ENCODE measurements at regions of chr16 and their contacts with region 1.

Region 1: DNA sequence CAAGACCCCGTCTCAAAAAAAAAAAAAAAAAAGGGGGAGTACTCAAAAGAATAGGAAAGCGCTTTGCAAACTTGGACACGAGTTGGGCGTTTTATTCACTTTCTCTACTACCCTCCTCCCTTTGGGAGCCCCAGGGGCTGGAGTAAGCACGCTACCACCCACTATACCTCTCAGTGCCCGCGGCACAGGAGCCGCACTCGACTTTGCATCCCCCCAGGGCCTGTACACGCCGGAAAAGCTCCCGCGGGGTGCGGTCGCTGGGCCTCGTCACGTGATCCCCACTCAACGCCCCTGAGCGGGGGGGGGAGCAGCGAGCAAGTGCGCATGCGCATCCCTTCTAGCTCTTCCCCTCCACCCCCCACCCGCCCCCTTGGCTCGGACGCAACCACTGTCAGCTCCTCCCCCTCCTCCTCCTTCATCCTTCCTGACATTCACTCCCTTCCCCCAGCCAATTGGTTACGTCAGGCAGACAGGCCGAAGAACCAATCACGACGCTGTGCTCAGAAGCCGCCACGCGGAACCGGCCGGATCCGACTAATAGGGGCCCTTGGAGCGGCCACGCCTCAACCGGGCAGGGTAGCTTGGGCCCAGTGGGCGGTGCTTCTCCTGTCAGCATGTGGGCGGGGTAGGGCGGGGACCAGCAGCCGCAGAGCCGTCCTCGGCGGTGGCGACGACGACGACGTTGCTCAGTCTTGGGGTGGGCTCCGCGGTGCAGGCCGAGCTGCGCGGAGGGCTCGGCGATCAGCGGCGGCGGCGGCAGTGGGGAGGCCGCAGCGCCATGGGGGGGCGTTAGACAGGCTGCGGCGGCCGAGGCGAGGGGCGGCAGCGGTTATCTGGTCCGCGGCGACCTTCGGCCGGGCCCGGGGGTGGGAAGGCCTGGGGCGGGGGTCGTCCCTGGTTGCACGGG is at the start of gene HAPSTR1:
- DNase-seq: peak; percentile 94 to 100
- ATAC-seq: peak; percentile 84 to 96 (median 86)
- H3K4me3 ChIP-seq: peak within 1 kb of the TSS; percentile 89
- H3K4me3 Mint-ChIP-seq: peak within 1 kb of the TSS; percentile 100
- H3K27ac ChIP-seq: peak within 1 kb of the TSS; percentile 92
- H3K27ac Mint-ChIP-seq: peak within 1 kb of the TSS; percentile 95 to 99
- H3K4me1 ChIP-seq: peaks cover 20% of the 10 kb centered on the region
- H3K4me1 Mint-ChIP-seq: peaks cover 49 to 53% of the 10 kb centered on the region in 2 donors
- H3K27me3 ChIP-seq: no peaks in the 10 kb centered on the region
- H3K27me3 Mint-ChIP-seq: no peaks in the 10 kb centered on the region
- CTCF ChIP-seq: no peak
- total RNA-seq, gene HAPSTR1: 135 to 145 (median 138) TPM

Region 2: DNA sequence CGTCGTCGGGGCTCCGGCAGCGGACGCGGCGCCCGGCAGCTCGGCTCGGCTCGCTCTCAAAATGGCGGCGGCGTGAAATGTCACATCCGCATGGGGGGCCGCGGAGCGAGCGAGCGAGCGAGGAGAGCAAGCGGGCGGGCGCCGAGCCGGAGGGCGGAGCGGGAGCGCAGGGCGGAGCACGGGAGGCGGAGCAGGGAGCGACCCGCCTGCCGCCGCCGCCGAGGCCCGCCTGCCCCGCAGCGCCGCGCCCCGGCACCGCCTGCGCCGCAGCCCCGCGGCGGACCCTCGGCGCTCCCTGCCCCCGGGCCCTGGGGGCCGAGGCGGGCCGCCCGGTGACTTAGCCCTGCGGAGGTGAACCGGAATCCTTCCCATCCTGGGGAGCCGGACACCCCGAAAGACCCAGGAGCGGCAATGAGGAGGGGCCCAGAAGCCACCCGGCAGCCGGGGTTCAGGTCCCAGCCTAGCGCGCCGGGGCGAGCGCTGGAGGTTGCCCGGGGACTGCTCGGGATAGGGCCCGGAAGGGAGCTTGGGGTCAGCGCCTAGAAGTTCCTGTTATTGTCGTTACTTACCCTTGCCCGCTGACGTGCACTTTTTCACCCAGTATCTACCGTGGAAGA is 127.3 kb before region 1 on chr16 and contains the start of gene USP7:
- intact Hi-C with region 1: loop called (anchors 5 kb)
- DNase-seq: peak; percentile 91 to 96
- ATAC-seq: peak; percentile 92 to 98 (median 94)
- H3K4me3 ChIP-seq: peak within 1 kb of the TSS; percentile 67
- H3K4me3 Mint-ChIP-seq: peak within 1 kb of the TSS; percentile 96
- H3K27ac ChIP-seq: peak within 1 kb of the TSS; percentile 74
- H3K27ac Mint-ChIP-seq: peak within 1 kb of the TSS; percentile 84 to 89
- H3K4me1 ChIP-seq: peaks cover 40% of the 10 kb centered on the region
- H3K4me1 Mint-ChIP-seq: peaks cover 36 to 44% of the 10 kb centered on the region in 2 donors
- H3K27me3 ChIP-seq: no peaks in the 10 kb centered on the region
- H3K27me3 Mint-ChIP-seq: no peaks in the 10 kb centered on the region
- CTCF ChIP-seq: no peak
- total RNA-seq, gene USP7: 213 to 268 (median 236) TPM

Region 3: GRCh38 chr16:9126609-9127008 is 35.4 kb after region 1 on chr16:
- intact Hi-C with region 1: loop called (anchors 1 kb)
- DNase-seq: no peak
- ATAC-seq: no peak
- H3K4me3 ChIP-seq: no peak overlapping the region
- H3K4me3 Mint-ChIP-seq: no peak overlapping the region
- H3K27ac ChIP-seq: peak overlapping the region; percentile 23
- H3K27ac Mint-ChIP-seq: peak overlapping the region; percentile 92 to 94
- H3K4me1 ChIP-seq: peaks cover 57% of the 10 kb centered on the region
- H3K4me1 Mint-ChIP-seq: peaks cover 46 to 64% of the 10 kb centered on the region in 2 donors
- H3K27me3 ChIP-seq: no peaks in the 10 kb centered on the region
- H3K27me3 Mint-ChIP-seq: no peaks in the 10 kb centered on the region
- CTCF ChIP-seq: no peak

Region 4: DNA sequence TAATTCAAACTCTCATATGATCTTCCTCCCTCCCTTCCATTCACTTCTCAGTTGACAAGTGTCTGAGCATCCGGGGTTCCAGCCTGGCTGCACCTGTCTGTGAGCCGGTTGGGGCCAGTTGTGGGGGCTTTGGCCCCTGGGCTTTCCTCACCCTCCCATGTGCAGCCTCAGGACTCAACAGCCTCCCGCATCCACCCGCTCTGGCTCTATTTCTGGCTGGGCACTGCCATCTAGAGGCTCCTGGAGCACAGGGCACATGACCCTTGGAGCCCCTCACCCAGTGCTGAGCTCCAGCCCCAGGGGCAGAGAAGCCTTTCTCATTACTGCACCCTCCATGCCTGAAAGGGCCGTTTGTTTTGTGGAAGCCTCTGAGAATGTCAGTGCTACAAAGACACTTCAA is 43.5 kb after region 1 on chr16:
- intact Hi-C with region 1: loop called (anchors 2 kb)
- DNase-seq: peak; percentile 53 to 76
- ATAC-seq: peak; percentile 67 to 78 (median 74)
- H3K4me3 ChIP-seq: no peak overlapping the region
- H3K4me3 Mint-ChIP-seq: peak overlapping the region; percentile 65
- H3K27ac ChIP-seq: no peak overlapping the region
- H3K27ac Mint-ChIP-seq: peak overlapping the region in 1 of 2 donors; percentile 58
- H3K4me1 ChIP-seq: peaks cover 43% of the 10 kb centered on the region
- H3K4me1 Mint-ChIP-seq: peaks cover 30 to 51% of the 10 kb centered on the region in 2 donors
- H3K27me3 ChIP-seq: no peaks in the 10 kb centered on the region
- H3K27me3 Mint-ChIP-seq: peaks cover 0 to 2% of the 10 kb centered on the region in 2 donors
- CTCF ChIP-seq: peak; percentile 58